Cardiac septum (tissue), 1 donor: ENCODE measurements at regions of chr17 and their contacts with region 1.

Region 1: DNA sequence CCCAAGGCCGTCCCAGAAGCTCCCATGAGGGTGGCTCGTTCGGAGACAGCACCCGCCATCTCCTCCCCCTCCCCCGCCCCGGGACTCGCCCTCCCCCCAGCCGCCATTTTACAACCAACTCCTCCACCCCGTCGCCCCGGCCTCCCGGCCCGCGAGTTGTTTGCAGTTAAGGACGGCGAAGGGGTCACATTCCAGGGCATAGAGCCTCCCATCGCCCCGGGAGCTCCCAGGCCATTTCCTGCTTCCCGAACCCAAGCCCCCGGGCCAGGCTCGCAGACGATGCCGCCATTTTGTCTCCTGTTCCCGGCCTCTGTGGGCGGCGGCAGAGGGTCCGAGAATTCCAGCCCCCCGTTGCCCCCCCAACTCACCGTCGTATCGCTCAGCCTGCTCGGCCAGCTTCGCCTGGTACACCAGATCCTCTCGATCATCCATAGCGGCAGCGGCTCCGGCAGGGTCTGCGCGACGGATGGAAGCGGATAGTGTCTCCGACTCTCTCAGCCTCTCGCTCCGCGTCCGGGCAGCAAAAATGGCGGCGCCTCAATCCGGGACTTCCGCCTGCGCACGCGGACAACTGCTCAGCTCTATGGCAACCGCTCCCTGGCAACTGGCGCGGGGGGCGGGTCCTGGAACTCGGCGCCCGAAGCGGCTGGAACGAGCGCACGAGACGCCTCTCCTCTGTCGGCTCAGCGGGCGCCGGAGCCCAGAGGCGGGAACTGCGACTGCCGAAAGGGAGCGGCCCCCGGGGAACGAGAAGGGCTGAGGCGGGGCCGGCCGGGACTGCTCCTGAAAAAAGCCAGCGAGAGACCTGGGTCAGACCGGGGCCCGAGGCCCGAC is at the start of gene YWHAE:
- DNase-seq: peak; percentile 99
- total RNA-seq, gene YWHAE: 582 TPM

Region 2: DNA sequence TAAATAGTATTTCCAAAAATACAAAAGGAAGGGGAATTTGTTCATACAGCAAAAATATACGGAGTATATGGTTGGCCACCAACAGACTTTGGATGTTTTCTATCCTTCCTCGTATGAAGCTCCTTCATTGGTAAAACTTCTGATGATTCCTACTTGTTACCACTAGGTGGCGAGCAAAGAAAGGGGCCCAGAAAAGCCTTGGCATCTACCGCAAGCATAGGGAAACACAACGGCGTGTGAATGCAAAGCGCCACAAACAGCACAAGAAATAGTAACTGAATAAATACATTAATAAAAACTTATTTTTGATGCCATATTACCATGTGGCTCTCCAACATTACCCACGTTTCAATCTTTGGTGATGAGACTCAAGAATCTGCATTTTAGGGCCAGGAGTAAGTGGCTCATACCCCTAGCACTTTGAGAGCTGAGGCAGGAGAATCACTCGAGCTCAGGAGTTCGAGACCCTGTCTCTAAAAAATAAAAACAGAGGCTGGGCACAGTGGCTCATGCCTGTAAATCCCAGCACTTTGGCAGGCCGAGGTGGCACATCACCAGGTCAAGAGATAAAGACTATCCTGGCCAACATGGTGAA is 34.4 kb before region 1 on chr17:
- intact Hi-C with region 1: loop called (anchors 5 kb)
- DNase-seq: peak; percentile 79

Region 3: DNA sequence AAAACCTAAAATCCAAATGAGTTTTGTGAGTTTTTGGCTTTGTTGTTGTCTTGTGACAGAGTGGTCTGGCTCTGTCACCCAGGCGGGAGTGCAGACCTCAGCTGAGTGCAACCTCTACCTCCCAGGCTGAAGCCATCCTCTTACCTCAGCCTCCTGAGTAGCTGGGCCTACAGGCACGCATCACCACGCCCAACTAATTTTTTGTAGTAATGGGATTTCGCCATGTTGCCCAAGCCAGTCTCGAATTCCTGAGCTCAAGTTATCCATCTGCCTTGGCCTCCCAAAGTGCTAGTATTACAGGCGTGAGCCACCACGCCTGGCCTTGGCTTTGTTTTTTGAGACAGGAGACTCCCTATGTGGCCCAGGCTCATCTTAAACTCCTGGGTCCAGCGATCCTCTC is 41.0 kb after region 1 on chr17:
- intact Hi-C with region 1: loop called (anchors 5 kb)
- DNase-seq: no peak

Region 4: DNA sequence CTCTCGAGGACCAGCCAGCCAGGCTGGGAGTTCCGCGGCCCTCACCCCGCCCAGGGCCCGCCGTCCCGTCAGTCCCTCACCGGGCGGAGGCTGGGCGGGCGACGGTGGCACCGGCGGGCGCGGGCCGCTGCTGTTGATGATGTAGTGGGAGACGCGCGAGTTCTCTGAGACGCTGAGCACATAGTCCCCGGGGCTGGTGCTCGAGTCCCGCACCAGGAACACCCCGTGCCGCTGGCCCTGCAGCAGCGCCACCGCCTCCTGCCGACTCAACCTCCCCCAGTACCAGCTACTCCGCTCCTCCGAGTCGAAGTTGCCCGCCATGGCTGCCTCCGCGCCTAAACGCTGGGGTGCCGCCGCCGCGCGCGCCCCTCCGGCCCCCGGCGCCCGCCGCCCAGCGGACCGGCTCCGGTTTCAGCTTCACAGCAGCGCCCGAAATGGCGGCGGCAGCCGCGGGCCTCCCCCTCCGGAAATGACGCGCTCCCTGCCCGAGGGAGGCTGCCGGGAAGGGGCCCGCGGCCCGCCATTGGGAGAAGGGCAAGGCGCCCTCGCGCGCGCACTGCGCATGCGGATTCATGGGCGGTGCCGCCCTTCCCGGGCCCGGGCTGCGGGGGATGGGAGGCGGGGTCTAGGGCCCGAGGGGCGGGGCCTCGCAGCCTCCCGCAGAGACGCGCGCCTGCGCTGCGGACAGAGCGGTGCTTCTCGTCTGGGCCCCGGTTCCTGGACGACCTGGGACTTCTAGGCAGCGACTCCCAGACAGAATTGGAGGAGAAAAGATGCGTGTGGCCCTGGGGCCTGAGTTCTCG is 56.1 kb after region 1 on chr17 and contains the start of gene CRK:
- intact Hi-C with region 1: loop called (anchors 5 kb)
- DNase-seq: peak; percentile 99
- total RNA-seq, gene CRK: 43.4 TPM

Region 5: GRCh38 chr17:1555651-1556471 is 156.0 kb after region 1 on chr17:
- intact Hi-C with region 1: no loop called
- DNase-seq: peak; percentile 89